Esophagus squamous epithelium (tissue), 5 donors: ENCODE measurements at regions of chr6 and their contacts with region 1.

Region 1: GRCh38 chr6:4021133-4021853 is 57.6 kb downstream of the FAM217A start:
- DNase-seq: peak; percentile 59
- H3K4me3 ChIP-seq: peak overlapping the region; percentile 69 to 95 (median 88)
- H3K27ac ChIP-seq: peak overlapping the region; percentile 94 to 99 (median 98)
- H3K4me1 ChIP-seq: peaks cover 41 to 80% (median 46%) of the 10 kb centered on the region in 3 donors
- H3K27me3 ChIP-seq: no peaks in the 10 kb centered on the region
- CTCF ChIP-seq: peak in 2 of 6 experiments; percentile 16 to 17
- POLR2A ChIP-seq: peak in 3 of 4 donors; percentile 36 to 80 (median 66)

Region 2: DNA sequence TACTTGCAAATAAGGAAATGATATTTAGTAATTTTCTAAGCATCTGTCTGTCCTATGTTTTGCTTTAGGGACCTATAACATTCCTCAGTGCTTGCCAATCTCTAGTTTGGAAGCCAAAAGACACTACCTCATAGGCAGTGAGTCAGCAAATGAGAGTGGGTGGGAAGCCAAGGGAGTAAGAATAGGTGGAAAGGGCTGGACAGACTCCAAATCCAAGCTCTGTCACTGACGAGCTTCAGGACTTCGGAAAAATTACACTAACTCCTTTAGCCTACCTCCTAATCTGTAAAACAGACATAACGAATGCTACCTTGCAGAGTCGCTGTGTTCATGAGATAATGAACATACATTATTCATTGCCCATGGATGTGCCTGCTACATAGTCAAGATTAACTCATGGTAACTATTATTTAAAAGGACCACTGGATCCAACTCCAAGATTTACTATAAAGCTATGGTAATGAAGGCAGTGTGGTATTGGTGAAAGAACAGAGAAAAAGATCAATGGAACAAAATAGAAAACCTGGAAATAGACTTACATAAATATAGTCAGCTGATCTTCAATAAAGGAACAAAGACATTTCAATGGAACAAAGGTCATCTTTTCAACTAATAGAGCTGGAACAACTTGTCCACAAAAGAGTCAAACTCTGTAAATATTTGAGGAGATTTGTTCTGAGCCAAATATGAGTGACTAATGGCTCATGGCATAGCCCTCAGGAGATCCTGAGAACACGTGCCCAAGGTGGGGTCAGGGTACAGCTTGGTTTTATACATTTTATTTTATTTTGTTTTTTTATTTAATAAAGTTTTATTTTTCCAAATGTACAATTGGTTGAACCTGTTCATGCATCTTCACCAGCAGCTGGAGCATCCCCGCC is 108.0 kb before region 1 on chr6:
- intact Hi-C with region 1: no loop called
- DNase-seq: no peak
- H3K4me3 ChIP-seq: no peak overlapping the region
- H3K27ac ChIP-seq: peak overlapping the region; percentile 65 to 85 (median 82)
- H3K4me1 ChIP-seq: peaks cover 10 to 32% (median 25%) of the 10 kb centered on the region in 3 donors
- H3K27me3 ChIP-seq: peaks cover 0 to 44% (median 0%) of the 10 kb centered on the region in 4 donors
- CTCF ChIP-seq: no peak
- POLR2A ChIP-seq: no peak

Region 3: DNA sequence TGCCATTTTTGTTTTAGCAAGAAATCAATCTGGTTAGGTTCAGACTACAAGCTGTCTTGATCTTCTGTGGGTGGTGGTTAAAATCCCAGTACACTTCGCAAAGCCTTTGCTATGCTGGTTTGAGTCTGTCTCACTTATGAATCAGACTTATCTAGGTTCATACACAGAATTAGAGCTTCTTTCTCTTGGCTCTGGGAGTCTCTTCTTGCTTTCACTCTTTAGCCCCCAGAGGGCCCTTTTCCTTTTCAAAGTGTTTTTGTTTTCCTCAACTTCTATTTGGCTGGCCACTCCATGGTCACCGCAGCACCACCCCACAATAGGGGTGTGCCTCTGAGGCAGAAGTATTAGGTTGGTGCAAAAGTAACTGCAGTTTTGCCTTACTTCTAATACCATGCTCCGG is 92.8 kb after region 1 on chr6:
- intact Hi-C with region 1: no loop called
- DNase-seq: no peak
- H3K4me3 ChIP-seq: no peak overlapping the region
- H3K27ac ChIP-seq: no peak overlapping the region
- H3K4me1 ChIP-seq: peaks cover 0 to 6% (median 0%) of the 10 kb centered on the region in 3 donors
- H3K27me3 ChIP-seq: no peaks in the 10 kb centered on the region
- CTCF ChIP-seq: no peak
- POLR2A ChIP-seq: no peak

Region 4: DNA sequence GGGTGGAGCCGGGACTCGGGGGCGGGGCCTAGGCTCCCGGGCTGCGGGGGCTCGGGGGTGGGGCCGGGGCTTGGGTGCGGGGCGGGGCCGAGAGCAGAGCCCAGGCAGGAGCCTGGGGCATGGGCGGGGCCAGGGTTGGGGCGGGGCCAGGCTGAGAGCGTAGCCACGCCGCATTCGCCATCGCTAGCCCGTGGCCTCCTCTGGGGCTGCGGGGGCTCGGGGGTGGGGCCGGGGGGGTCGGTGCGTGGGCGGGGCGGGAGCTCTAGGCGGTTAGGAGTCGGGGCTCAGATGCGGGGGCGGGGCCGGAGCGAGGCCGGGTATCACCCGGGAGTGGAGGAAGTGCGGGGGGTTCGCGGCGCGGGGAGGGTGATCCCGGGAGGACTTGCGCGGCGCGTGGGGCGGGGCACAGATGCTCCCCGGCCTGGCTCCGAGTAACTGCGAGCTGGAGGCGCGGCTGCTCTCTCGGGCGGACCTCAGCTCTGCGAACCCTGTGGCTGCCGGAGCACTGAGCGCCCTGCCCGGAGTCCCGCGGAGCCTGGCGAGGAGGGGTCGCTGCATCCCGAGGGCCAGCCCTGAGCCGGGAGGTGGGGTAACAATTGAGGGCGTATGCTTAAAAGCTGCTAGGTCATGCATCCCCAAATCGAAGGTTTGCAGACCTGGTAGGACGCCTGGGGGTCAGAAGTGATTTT is 114.5 kb after region 1 on chr6:
- intact Hi-C with region 1: loop called (anchors 10 kb)
- DNase-seq: peak; percentile 67
- H3K4me3 ChIP-seq: peak overlapping the region; percentile 61 to 87 (median 80)
- H3K27ac ChIP-seq: peak overlapping the region; percentile 78 to 96 (median 85)
- H3K4me1 ChIP-seq: peaks cover 0 to 39% (median 11%) of the 10 kb centered on the region in 3 donors
- H3K27me3 ChIP-seq: no peaks in the 10 kb centered on the region
- CTCF ChIP-seq: peak in 1 of 6 experiments; percentile 5
- POLR2A ChIP-seq: peak in 2 of 4 donors; percentile 32 to 62